ENCODE measurements at regions of chr4 and their contacts with region 1.

Region 1: GRCh38 chr4:38529189-38530115 is 134.5 kb upstream of the KLF3 start:
- DNase-seq: peak; percentile 80
- ATAC-seq: peak; percentile 96
- H3K4me3 Mint-ChIP-seq: peak overlapping the region; percentile 21
- H3K27ac Mint-ChIP-seq: peak overlapping the region; percentile 83
- H3K4me1 Mint-ChIP-seq: peaks cover 22% of the 10 kb centered on the region
- H3K27me3 Mint-ChIP-seq: no peaks in the 10 kb centered on the region

Region 2: DNA sequence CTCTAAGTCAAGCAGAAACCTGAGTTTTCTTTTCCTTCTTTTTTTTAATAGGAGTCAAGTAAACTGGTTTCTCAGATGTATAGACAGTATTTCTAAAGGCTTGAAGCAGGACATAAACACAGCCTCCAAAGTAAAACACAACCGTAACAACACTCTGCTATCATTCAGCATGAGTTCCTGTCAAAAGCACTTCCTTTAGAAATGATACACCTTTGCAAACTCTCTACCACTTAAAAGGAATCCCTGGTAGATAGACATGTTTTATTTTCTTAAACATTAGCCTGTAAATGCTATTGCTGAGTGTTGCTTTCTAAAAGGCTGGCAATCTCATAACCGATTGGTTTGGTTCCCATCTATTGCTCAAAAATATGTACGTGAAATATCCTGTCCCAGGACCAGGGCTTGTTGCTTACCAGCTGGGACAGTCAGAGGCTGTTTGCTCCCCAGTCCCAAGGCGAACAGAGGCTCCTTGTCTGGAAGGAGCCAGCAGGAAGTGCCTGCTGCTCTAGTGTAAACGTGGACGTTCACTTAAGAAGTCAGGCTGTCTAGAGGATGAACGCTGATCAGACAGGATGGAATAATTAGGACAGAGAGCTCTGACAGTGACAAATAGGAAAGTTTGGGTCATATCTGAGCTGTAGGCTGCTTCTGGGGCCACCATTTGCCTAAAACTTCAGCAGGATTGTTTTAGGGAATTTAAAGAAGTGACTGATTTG is 39.4 kb before region 1 on chr4:
- CTCF ChIA-PET with region 1: no interaction called
- POLR2A ChIA-PET with region 1: no interaction called
- intact Hi-C with region 1: loop called (anchors 1 to 5 kb)
- DNase-seq: peak; percentile 29
- ATAC-seq: peak; percentile 87
- H3K4me3 Mint-ChIP-seq: peak overlapping the region; percentile 52
- H3K27ac Mint-ChIP-seq: peak overlapping the region; percentile 88
- H3K4me1 Mint-ChIP-seq: peaks cover 38% of the 10 kb centered on the region
- H3K27me3 Mint-ChIP-seq: no peaks in the 10 kb centered on the region